A549 (cell line): ENCODE measurements at regions of chr5 and their contacts with region 1.

Region 1: DNA sequence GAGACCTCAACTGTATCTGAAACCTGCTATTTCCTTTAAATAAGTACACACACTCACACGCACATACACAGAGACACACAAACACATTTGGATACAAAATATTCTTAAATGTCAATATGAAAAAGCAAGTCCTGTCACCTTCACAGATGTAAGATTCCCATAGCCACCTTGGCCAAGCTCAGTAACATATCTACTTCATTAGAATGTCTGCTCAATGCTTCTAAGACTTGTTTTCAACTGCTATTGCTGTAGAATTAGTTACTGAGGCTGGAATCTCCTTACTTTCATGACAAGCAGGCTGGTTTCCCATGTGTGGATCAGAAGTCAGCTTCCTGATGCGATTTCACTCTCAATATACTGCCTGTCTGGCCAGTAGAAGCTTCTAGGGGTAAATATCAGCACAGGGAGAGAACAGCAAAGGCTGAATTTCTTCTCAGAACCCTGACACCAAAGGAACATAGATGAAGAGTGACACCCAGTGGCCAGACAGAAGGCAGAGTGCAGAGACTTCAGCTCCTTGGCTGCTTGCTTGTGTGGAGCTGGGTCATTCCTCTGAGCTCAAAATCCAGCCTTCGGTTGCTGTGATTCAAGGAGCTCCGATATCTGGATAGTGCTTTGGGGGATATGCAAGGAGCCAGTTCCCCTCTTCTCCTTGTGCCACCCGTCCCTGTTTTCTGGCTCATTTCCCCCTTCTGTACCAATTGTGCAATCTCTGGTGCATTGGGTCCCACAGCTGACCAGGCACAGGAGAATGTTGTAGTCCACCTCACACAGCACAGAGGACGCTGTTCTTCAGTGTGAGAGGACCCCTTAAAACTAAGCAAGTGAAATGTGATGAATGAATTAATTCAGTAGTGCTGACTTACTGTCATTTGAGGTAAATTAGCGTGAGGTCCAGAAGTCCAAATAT is 26.6 kb upstream of the ABLIM3 start:
- DNase-seq: peak; percentile 33 to 75
- ATAC-seq: peak; percentile 99 to 100
- H3K4me3 ChIP-seq: no peak overlapping the region
- H3K27ac ChIP-seq: 0 out of 6 replicates have a peak overlapping the region, but pooled peaks have one; percentile 11 to 35
- H3K4me1 ChIP-seq: peaks cover 9% of the 10 kb centered on the region; the same call in 2 of the 3 replicates
- CTCF ChIP-seq: peak; percentile 78
- EP300 ChIP-seq: no peak
- POLR2A ChIP-seq: no peak
- RAD21 ChIP-seq: peak; percentile 86 to 90

Region 2: GRCh38 chr5:148912714-148913398 is 201.8 kb before region 1 on chr5:
- CTCF ChIA-PET with region 1: interaction called, 10 read pairs
- POLR2A ChIA-PET with region 1: no interaction called
- DNase-seq: peak; percentile 82
- ATAC-seq: peak; percentile 91 to 96
- H3K4me3 ChIP-seq: no peak overlapping the region
- H3K27ac ChIP-seq: peak overlapping the region; percentile 43 to 59; a peak in 5 of 6 replicates
- H3K4me1 ChIP-seq: peaks cover 37% of the 10 kb centered on the region
- CTCF ChIP-seq: peak; percentile 52
- EP300 ChIP-seq: peak in 1 of 2 experiments; percentile 29; a peak in 1 of 5 replicates
- POLR2A ChIP-seq: no peak
- RAD21 ChIP-seq: peak; percentile 65 to 66

Region 3: GRCh38 chr5:149128023-149128875 is 13.6 kb after region 1 on chr5:
- CTCF ChIA-PET with region 1: interaction called, 35 read pairs
- POLR2A ChIA-PET with region 1: no interaction called
- DNase-seq: peak; percentile 30 to 76
- ATAC-seq: peak; percentile 88 to 97
- H3K4me3 ChIP-seq: no peak overlapping the region
- H3K27ac ChIP-seq: no peak overlapping the region
- H3K4me1 ChIP-seq: no peaks in the 10 kb centered on the region
- CTCF ChIP-seq: peak; percentile 60
- EP300 ChIP-seq: no peak
- POLR2A ChIP-seq: no peak
- RAD21 ChIP-seq: peak; percentile 31 to 57; a peak in 4 of 5 replicates

Region 4: GRCh38 chr5:149133795-149134780 is 19.4 kb after region 1 on chr5:
- CTCF ChIA-PET with region 1: interaction called, 17 read pairs
- POLR2A ChIA-PET with region 1: no interaction called
- DNase-seq: peak; percentile 62 to 72
- ATAC-seq: peak; percentile 92 to 96
- H3K4me3 ChIP-seq: no peak overlapping the region
- H3K27ac ChIP-seq: peak overlapping the region; percentile 73 to 78
- H3K4me1 ChIP-seq: peaks cover 21% of the 10 kb centered on the region
- CTCF ChIP-seq: no peak
- EP300 ChIP-seq: no peak
- POLR2A ChIP-seq: no peak
- RAD21 ChIP-seq: no peak

Region 5: DNA sequence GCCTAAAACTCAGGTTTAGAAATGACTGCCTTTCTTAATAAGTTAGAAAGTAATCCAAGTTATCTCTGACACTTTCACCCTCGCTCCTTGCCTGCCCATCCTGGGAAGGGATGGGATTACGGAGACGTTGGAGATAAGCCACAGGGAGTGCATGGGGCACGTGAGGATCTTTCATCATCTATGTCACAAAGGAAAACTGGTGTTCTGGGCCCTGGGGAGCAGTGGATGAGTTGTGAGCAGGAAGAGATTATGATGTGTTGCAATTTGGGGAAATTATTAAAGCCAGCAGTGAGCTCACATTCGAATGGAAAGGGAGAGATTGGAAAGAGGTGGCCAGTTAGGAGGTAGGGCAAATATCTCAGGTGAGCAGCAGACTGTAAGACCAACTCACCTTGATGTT is 169.8 kb after region 1 on chr5:
- CTCF ChIA-PET with region 1: no interaction called
- POLR2A ChIA-PET with region 1: no interaction called
- DNase-seq: no peak
- ATAC-seq: no peak
- H3K4me3 ChIP-seq: no peak overlapping the region
- H3K27ac ChIP-seq: no peak overlapping the region
- H3K4me1 ChIP-seq: no peaks in the 10 kb centered on the region
- CTCF ChIP-seq: no peak
- EP300 ChIP-seq: no peak
- POLR2A ChIP-seq: no peak
- RAD21 ChIP-seq: no peak